Activated CD4-positive, alpha-beta memory T cell treated with anti-CD3 and anti-CD28 coated beads, Interleukin-2, amount 10 ng/mL, durations not matched to agents 7 days and 5 days (primary cell): ENCODE measurements at regions of chr22 and their contacts with region 1.

Region 1: DNA sequence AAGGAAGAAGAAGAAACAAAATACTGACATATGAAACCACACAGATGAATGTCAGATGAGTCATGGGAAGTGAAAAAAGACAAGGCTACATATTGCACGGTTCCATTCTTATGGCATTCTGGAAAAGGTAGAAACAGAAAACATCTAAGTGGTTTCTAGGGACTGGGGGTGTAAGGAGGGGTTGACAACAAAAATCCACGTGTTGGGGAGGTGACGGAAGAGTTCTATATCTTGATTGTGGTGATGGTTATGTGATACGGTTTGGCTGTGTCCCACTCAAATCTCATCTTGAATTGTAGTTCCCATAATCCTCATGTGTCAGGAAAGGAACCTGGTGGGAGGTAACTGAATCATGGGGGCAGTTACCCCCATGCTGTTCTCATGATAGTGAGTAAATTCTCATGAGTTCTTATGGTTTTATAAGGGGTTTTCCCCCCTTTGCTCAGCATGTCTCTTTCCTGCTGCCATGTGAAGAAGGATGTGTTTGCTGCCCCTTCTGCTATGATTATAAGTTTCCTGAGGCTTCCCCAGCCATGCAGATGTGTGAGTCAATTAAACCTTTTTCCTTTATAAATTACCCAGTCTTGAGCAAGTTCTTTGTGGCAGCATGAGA is 6.4 kb upstream of the ARFGAP3 start:
- DNase-seq: no peak
- H3K4me3 Mint-ChIP-seq: no peak overlapping the region
- H3K27ac Mint-ChIP-seq: no peak overlapping the region
- H3K4me1 Mint-ChIP-seq: peaks cover 14% of the 10 kb centered on the region
- H3K27me3 Mint-ChIP-seq: no peaks in the 10 kb centered on the region

Region 2: DNA sequence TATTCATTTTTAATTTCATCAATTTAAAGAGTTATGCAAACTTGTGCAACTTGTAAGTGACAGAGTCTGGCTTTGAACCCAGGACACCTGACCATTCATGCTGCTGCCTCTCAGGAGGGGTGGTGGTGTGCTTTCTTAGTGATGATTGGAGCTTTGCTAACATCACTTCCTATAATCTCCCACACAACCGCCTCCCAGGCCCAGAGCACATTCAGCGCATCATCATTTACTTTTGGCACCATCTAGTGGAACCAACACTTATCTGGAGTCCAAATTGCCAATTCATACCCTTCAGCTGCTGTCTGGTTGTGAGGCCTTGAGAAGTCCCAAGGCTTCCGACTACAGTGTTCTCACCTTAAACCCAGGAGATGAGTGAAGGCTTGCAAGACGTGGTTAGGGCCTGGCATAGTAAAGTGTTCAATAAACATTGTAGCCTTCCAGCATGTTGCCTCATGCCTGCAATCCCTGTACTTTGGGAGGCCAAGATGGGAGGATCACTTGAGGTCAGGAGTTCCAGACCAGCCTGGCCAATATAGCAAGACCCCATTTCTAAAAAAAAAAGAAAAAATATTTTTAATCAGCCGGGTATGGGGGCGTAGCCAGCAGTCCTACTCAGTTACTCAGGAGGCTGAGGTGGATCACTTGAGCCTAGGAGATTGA is 226.8 kb after region 1 on chr22:
- CTCF ChIA-PET with region 1: interaction called, 11 read pairs
- POLR2A ChIA-PET with region 1: interaction called, 3 read pairs
- DNase-seq: peak; percentile 63
- H3K4me3 Mint-ChIP-seq: peak overlapping the region; percentile 55
- H3K27ac Mint-ChIP-seq: peak overlapping the region; percentile 62
- H3K4me1 Mint-ChIP-seq: peaks cover 27% of the 10 kb centered on the region
- H3K27me3 Mint-ChIP-seq: no peaks in the 10 kb centered on the region